ENCODE measurements at regions of chr6 and their contacts with region 1.

Region 1: DNA sequence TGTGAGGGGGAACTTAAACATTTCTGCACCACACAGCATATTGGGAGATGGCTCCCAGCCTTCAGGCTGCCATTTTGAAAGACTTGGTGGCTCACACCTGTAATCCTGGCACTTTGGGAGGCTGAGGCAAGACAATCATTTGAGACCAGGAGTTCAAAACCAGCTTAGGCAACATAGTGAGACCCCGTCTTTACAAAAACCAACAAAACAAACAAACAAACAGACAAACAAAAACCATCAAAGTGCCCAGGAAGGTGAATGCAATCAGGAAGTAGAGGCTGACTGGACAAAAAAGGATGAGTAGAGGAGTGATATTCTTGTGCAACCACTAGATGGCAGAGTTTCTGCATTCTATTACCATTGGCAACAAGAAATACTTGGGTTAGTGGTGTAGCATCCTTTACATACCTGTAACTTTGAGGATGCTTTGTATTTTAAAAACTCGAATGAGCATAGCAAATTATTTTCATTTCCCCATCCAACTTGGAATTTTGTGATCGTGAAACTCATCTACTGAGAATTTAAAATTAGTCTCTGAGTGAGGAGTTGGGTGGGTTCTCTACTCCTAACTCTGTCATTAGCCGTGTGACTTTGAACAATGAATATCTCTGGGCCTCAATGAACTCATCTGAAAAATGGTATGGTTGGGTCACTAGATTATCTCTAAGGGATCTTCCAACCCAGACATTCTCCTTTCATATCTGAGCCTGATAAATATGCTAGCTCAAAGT is 84.4 kb downstream of the CRYBG1 start:
- DNase-seq: peak; percentile 46
- ATAC-seq: peak; percentile 92
- H3K4me3 ChIP-seq: no peak overlapping the region
- H3K27ac ChIP-seq: no peak overlapping the region
- H3K4me1 ChIP-seq: peaks cover 8% of the 10 kb centered on the region
- H3K27me3 ChIP-seq: no peaks in the 10 kb centered on the region; a peak in 1 of 4 replicates
- CTCF ChIP-seq: peak; percentile 60 to 79 (median 78)
- EP300 ChIP-seq: no peak
- POLR2A ChIP-seq: no peak
- RAD21 ChIP-seq: peak; percentile 79

Region 2: GRCh38 chr6:106339334-106340029 is 105.5 kb before region 1 on chr6:
- CTCF ChIA-PET with region 1: interaction called, 51 read pairs
- POLR2A ChIA-PET with region 1: no interaction called
- RAD21 ChIA-PET with region 1: interaction called, 14 read pairs
- SMC1A ChIA-PET with region 1: interaction called, 22 read pairs
- in situ Hi-C with region 1: no loop called
- intact Hi-C with region 1: loop called (anchors 1 kb)
- DNase-seq: no peak
- ATAC-seq: peak; percentile 94
- H3K4me3 ChIP-seq: no peak overlapping the region
- H3K27ac ChIP-seq: no peak overlapping the region
- H3K4me1 ChIP-seq: no peaks in the 10 kb centered on the region
- H3K27me3 ChIP-seq: no peaks in the 10 kb centered on the region
- CTCF ChIP-seq: peak; percentile 68 to 77 (median 73)
- EP300 ChIP-seq: no peak
- POLR2A ChIP-seq: no peak
- RAD21 ChIP-seq: peak; percentile 57

Region 3: GRCh38 chr6:106421496-106421895 is 23.4 kb before region 1 on chr6:
- CTCF ChIA-PET with region 1: no interaction called
- POLR2A ChIA-PET with region 1: no interaction called
- RAD21 ChIA-PET with region 1: no interaction called
- SMC1A ChIA-PET with region 1: no interaction called
- in situ Hi-C with region 1: no loop called
- intact Hi-C with region 1: no loop called
- DNase-seq: no peak
- ATAC-seq: no peak
- H3K4me3 ChIP-seq: no peak overlapping the region
- H3K27ac ChIP-seq: no peak overlapping the region
- H3K4me1 ChIP-seq: no peaks in the 10 kb centered on the region
- H3K27me3 ChIP-seq: 0 out of 4 replicates have a peak, but pooled peaks cover 0 to 3% of the 10 kb centered on the region in 2 experiments
- CTCF ChIP-seq: no peak
- EP300 ChIP-seq: no peak
- POLR2A ChIP-seq: no peak
- RAD21 ChIP-seq: no peak

Region 4: DNA sequence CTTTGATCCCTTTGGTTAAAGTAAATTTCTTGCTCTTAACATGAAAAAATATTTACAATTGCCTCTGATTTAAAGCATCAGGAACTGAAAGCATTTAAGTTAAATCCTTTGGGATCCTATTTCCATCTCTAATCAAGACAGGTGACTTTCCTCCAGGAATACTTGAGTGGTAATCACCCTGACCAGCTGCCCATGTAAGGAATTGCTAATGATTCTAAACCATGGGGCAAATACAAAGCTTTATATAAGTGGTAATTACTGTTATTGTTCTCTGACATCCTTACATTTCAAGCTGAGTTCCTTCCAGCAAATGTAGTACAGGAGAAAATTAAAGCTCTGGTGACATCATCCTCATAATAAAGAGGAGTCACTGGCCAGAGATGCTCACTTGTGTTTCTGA is 16.1 kb after region 1 on chr6:
- CTCF ChIA-PET with region 1: interaction called, 11 read pairs
- POLR2A ChIA-PET with region 1: no interaction called
- RAD21 ChIA-PET with region 1: interaction called, 4 read pairs
- SMC1A ChIA-PET with region 1: interaction called, 6 read pairs
- in situ Hi-C with region 1: no loop called
- intact Hi-C with region 1: no loop called
- DNase-seq: no peak
- ATAC-seq: no peak
- H3K4me3 ChIP-seq: no peak overlapping the region
- H3K27ac ChIP-seq: no peak overlapping the region
- H3K4me1 ChIP-seq: no peaks in the 10 kb centered on the region
- H3K27me3 ChIP-seq: no peaks in the 10 kb centered on the region
- CTCF ChIP-seq: no peak
- EP300 ChIP-seq: no peak
- POLR2A ChIP-seq: no peak
- RAD21 ChIP-seq: no peak

Region 5: GRCh38 chr6:106512048-106512967 is 67.4 kb after region 1 on chr6:
- CTCF ChIA-PET with region 1: interaction called, 10 read pairs
- POLR2A ChIA-PET with region 1: no interaction called
- RAD21 ChIA-PET with region 1: interaction called, 5 read pairs
- SMC1A ChIA-PET with region 1: interaction called, 7 read pairs
- in situ Hi-C with region 1: no loop called
- intact Hi-C with region 1: loop called (anchors 1 kb)
- DNase-seq: no peak
- ATAC-seq: peak; percentile 75
- H3K4me3 ChIP-seq: peak overlapping the region; percentile 87
- H3K27ac ChIP-seq: peak overlapping the region; percentile 90
- H3K4me1 ChIP-seq: peaks cover 5% of the 10 kb centered on the region; the same call in 1 of the 2 replicates
- H3K27me3 ChIP-seq: no peaks in the 10 kb centered on the region; a peak in 1 of 4 replicates
- CTCF ChIP-seq: peak in 2 of 3 experiments; percentile 45 to 59; a peak in 3 of 6 replicates
- EP300 ChIP-seq: no peak
- POLR2A ChIP-seq: peak; percentile 57; the same call in 1 of the 2 replicates
- RAD21 ChIP-seq: peak; percentile 45

Region 6: GRCh38 chr6:106556368-106556960 is 111.5 kb after region 1 on chr6:
- CTCF ChIA-PET with region 1: interaction called, 403 read pairs
- POLR2A ChIA-PET with region 1: no interaction called
- RAD21 ChIA-PET with region 1: interaction called, 5 read pairs
- SMC1A ChIA-PET with region 1: interaction called, 8 read pairs
- in situ Hi-C with region 1: no loop called
- intact Hi-C with region 1: no loop called
- DNase-seq: no peak
- ATAC-seq: peak; percentile 47; the same call in 2 of the 3 replicates
- H3K4me3 ChIP-seq: no peak overlapping the region
- H3K27ac ChIP-seq: no peak overlapping the region
- H3K4me1 ChIP-seq: no peaks in the 10 kb centered on the region
- H3K27me3 ChIP-seq: no peaks in the 10 kb centered on the region
- CTCF ChIP-seq: peak; percentile 16 to 37 (median 23); a peak in 3 of 6 replicates
- EP300 ChIP-seq: no peak
- POLR2A ChIP-seq: no peak
- RAD21 ChIP-seq: peak; percentile 63

Region 7: GRCh38 chr6:106568530-106568929 is 123.6 kb after region 1 on chr6:
- CTCF ChIA-PET with region 1: interaction called, 403 read pairs
- POLR2A ChIA-PET with region 1: no interaction called
- RAD21 ChIA-PET with region 1: interaction called, 24 read pairs
- SMC1A ChIA-PET with region 1: interaction called, 86 read pairs
- in situ Hi-C with region 1: loop called (anchors 5 kb)
- intact Hi-C with region 1: loop called (anchors 1 kb)
- DNase-seq: no peak
- ATAC-seq: no peak
- H3K4me3 ChIP-seq: no peak overlapping the region
- H3K27ac ChIP-seq: no peak overlapping the region
- H3K4me1 ChIP-seq: no peaks in the 10 kb centered on the region
- H3K27me3 ChIP-seq: no peaks in the 10 kb centered on the region
- CTCF ChIP-seq: no peak
- EP300 ChIP-seq: no peak
- POLR2A ChIP-seq: no peak
- RAD21 ChIP-seq: no peak

Region 8: GRCh38 chr6:106997390-106998158 is 552.6 kb after region 1 on chr6:
- CTCF ChIA-PET with region 1: interaction called, 15 read pairs
- POLR2A ChIA-PET with region 1: no interaction called
- RAD21 ChIA-PET with region 1: interaction called, 10 read pairs
- SMC1A ChIA-PET with region 1: no interaction called
- in situ Hi-C with region 1: no loop called
- intact Hi-C with region 1: no loop called
- DNase-seq: peak; percentile 12
- ATAC-seq: peak; percentile 91
- H3K4me3 ChIP-seq: no peak overlapping the region
- H3K27ac ChIP-seq: no peak overlapping the region
- H3K4me1 ChIP-seq: no peaks in the 10 kb centered on the region
- H3K27me3 ChIP-seq: no peaks in the 10 kb centered on the region
- CTCF ChIP-seq: peak; percentile 81 to 96 (median 91)
- EP300 ChIP-seq: no peak
- POLR2A ChIP-seq: no peak
- RAD21 ChIP-seq: peak; percentile 74

Region 9: GRCh38 chr6:107784669-107785068 is 1339.7 kb after region 1 on chr6:
- CTCF ChIA-PET with region 1: no interaction called
- POLR2A ChIA-PET with region 1: no interaction called
- RAD21 ChIA-PET with region 1: no interaction called
- SMC1A ChIA-PET with region 1: no interaction called
- in situ Hi-C with region 1: no loop called
- intact Hi-C with region 1: no loop called
- DNase-seq: no peak
- ATAC-seq: no peak
- H3K4me3 ChIP-seq: no peak overlapping the region
- H3K27ac ChIP-seq: no peak overlapping the region
- H3K4me1 ChIP-seq: peaks cover 6% of the 10 kb centered on the region; the same call in 1 of the 2 replicates
- H3K27me3 ChIP-seq: peaks cover 0 to 3% of the 10 kb centered on the region in 2 experiments; a peak in 3 of 4 replicates
- CTCF ChIP-seq: no peak
- EP300 ChIP-seq: no peak
- POLR2A ChIP-seq: no peak
- RAD21 ChIP-seq: no peak